ENCODE measurements at regions of chr1 and their contacts with region 1.

Region 1: GRCh38 chr1:201023517-201023902 is at the start of gene KIF21B:
- DNase-seq: peak; percentile 92
- ATAC-seq: peak; percentile 83
- H3K4me3 ChIP-seq: peak within 1 kb of the TSS; percentile 53 to 83 (median 72)
- H3K4me3 Mint-ChIP-seq: peak within 1 kb of the TSS; percentile 97
- H3K27ac ChIP-seq: peak within 1 kb of the TSS; percentile 90 to 95
- H3K27ac Mint-ChIP-seq: peak within 1 kb of the TSS; percentile 98
- H3K4me1 ChIP-seq: peaks cover 69 to 79% of the 10 kb centered on the region in 2 donors
- H3K4me1 Mint-ChIP-seq: peaks cover 77% of the 10 kb centered on the region
- H3K27me3 ChIP-seq: no peaks in the 10 kb centered on the region
- H3K27me3 Mint-ChIP-seq: no peaks in the 10 kb centered on the region
- CTCF ChIP-seq: no peak
- total RNA-seq, gene KIF21B: 41.6 and 42.0 TPM in 2 replicates

Region 2: DNA sequence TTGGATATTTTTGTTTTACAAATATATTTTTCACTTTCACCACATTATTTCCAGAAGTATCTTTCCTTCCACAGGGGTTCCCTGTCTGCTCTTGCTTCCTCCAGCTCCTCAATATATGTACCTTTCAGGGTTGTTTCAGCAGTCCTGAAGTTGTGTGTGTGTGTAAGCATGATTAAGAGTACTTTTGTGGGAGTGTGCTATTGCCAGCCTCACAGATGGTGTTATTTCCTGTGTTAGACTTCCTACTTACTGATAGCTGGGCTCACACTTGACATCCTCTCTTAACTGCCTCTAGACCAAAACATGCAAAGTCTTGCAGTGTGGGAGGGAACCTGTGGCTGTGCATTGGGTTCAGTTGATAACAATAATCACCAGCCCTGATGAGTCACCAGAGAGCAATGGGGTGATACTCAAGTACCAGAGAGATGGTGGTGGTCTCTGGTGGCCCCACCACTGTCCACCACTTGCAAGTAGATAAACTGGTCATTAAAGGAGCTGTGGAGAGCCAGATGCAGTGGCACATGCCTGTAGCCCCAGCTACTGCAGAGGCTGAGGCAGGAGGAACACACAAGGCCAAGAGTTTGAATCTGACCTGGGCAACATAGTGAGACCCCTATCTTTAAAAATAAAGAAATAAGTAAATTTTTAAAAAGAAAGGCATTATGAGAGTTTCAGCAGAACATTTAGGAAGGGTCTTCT is 869.3 kb before region 1 on chr1:
- CTCF ChIA-PET with region 1: no interaction called
- POLR2A ChIA-PET with region 1: no interaction called
- intact Hi-C with region 1: loop called (anchors 10 kb)
- DNase-seq: peak; percentile 78
- ATAC-seq: peak; percentile 88
- H3K4me3 ChIP-seq: peak overlapping the region in 2 of 5 experiments; percentile 18 to 50
- H3K4me3 Mint-ChIP-seq: peak overlapping the region; percentile 80
- H3K27ac ChIP-seq: peak overlapping the region; percentile 78 to 98
- H3K27ac Mint-ChIP-seq: peak overlapping the region; percentile 93
- H3K4me1 ChIP-seq: peaks cover 40 to 52% of the 10 kb centered on the region in 2 donors
- H3K4me1 Mint-ChIP-seq: peaks cover 59% of the 10 kb centered on the region
- H3K27me3 ChIP-seq: no peaks in the 10 kb centered on the region
- H3K27me3 Mint-ChIP-seq: no peaks in the 10 kb centered on the region
- CTCF ChIP-seq: no peak

Region 3: GRCh38 chr1:200669314-200670241 is 353.9 kb before region 1 on chr1 and contains the start of gene DDX59:
- CTCF ChIA-PET with region 1: no interaction called
- POLR2A ChIA-PET with region 1: interaction called, 4 read pairs
- intact Hi-C with region 1: loop called (anchors 5 kb)
- DNase-seq: peak; percentile 92
- ATAC-seq: peak; percentile 82
- H3K4me3 ChIP-seq: peak within 1 kb of the TSS; percentile 56 to 95 (median 78)
- H3K4me3 Mint-ChIP-seq: peak within 1 kb of the TSS; percentile 99
- H3K27ac ChIP-seq: peak within 1 kb of the TSS; percentile 92 to 98
- H3K27ac Mint-ChIP-seq: peak within 1 kb of the TSS; percentile 99
- H3K4me1 ChIP-seq: peaks cover 8 to 13% of the 10 kb centered on the region in 2 donors
- H3K4me1 Mint-ChIP-seq: peaks cover 42% of the 10 kb centered on the region
- H3K27me3 ChIP-seq: no peaks in the 10 kb centered on the region
- H3K27me3 Mint-ChIP-seq: no peaks in the 10 kb centered on the region
- CTCF ChIP-seq: no peak
- total RNA-seq, gene DDX59: 41.9 and 43.6 TPM in 2 replicates

Region 4: GRCh38 chr1:200780545-200781369 is 242.8 kb before region 1 on chr1:
- CTCF ChIA-PET with region 1: no interaction called
- POLR2A ChIA-PET with region 1: no interaction called
- intact Hi-C with region 1: no loop called
- DNase-seq: peak; percentile 4
- ATAC-seq: no peak
- H3K4me3 ChIP-seq: no peak overlapping the region
- H3K4me3 Mint-ChIP-seq: peak overlapping the region; percentile 33
- H3K27ac ChIP-seq: no peak overlapping the region
- H3K27ac Mint-ChIP-seq: no peak overlapping the region
- H3K4me1 ChIP-seq: peaks cover 0 to 4% of the 10 kb centered on the region in 2 donors
- H3K4me1 Mint-ChIP-seq: peaks cover 5% of the 10 kb centered on the region
- H3K27me3 ChIP-seq: no peaks in the 10 kb centered on the region
- H3K27me3 Mint-ChIP-seq: no peaks in the 10 kb centered on the region
- CTCF ChIP-seq: no peak

Region 5: DNA sequence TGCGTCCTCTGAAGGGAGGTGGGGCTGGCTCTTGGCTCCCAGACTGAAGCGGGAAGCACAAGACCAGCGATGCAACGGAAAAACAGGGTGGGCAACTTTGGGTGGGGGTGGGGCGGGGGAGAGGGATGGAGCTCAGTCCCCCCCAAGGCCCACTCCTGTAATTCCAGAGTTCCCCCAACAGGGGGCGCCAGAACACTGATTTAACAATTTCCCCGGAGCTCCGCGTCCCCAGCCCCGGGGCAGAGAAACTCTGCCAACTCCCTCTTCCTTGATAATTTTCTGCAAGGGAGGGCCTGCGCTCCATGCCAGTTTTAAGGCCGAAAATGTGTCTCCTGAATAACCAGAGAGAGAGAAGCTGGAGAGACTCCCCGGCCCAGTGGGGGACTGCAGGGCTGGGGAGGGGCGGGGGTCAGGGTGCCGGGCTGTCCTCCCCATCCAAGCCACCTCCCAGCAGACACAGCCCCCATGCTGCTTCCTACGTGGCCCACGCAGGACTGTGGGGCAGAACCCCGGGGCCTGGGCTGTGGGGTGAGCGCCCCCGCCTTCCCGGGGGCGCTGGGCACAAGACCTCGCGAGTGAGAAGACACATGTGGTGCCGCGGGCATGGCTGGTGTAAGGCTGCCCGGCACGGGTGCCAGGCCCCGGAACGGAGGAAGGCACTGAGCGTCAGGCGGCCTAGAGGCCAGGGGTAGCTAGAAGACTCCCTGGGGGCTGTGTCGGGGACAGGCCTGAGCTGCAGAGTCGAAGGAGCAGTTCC is 51.4 kb before region 1 on chr1:
- CTCF ChIA-PET with region 1: interaction called, 67 read pairs
- POLR2A ChIA-PET with region 1: interaction called, 3 read pairs
- intact Hi-C with region 1: no loop called
- DNase-seq: peak; percentile 69
- ATAC-seq: peak; percentile 49
- H3K4me3 ChIP-seq: no peak overlapping the region
- H3K4me3 Mint-ChIP-seq: no peak overlapping the region
- H3K27ac ChIP-seq: no peak overlapping the region
- H3K27ac Mint-ChIP-seq: no peak overlapping the region
- H3K4me1 ChIP-seq: no peaks in the 10 kb centered on the region
- H3K4me1 Mint-ChIP-seq: peaks cover 11% of the 10 kb centered on the region
- H3K27me3 ChIP-seq: no peaks in the 10 kb centered on the region
- H3K27me3 Mint-ChIP-seq: no peaks in the 10 kb centered on the region
- CTCF ChIP-seq: peak; percentile 99

Region 6: GRCh38 chr1:201114236-201115131 is 91.0 kb after region 1 on chr1:
- CTCF ChIA-PET with region 1: interaction called, 7 read pairs
- POLR2A ChIA-PET with region 1: no interaction called
- intact Hi-C with region 1: loop called (anchors 1 kb)
- DNase-seq: peak; percentile 78
- ATAC-seq: peak; percentile 88
- H3K4me3 ChIP-seq: peak overlapping the region; percentile 31 to 77 (median 58)
- H3K4me3 Mint-ChIP-seq: peak overlapping the region; percentile 87
- H3K27ac ChIP-seq: no peak overlapping the region
- H3K27ac Mint-ChIP-seq: no peak overlapping the region
- H3K4me1 ChIP-seq: peaks cover 4 to 13% of the 10 kb centered on the region in 2 donors
- H3K4me1 Mint-ChIP-seq: peaks cover 4% of the 10 kb centered on the region
- H3K27me3 ChIP-seq: peaks cover 0 to 32% (median 14%) of the 10 kb centered on the region in 4 experiments
- H3K27me3 Mint-ChIP-seq: peaks cover 29% of the 10 kb centered on the region
- CTCF ChIP-seq: peak; percentile 75

Region 7: DNA sequence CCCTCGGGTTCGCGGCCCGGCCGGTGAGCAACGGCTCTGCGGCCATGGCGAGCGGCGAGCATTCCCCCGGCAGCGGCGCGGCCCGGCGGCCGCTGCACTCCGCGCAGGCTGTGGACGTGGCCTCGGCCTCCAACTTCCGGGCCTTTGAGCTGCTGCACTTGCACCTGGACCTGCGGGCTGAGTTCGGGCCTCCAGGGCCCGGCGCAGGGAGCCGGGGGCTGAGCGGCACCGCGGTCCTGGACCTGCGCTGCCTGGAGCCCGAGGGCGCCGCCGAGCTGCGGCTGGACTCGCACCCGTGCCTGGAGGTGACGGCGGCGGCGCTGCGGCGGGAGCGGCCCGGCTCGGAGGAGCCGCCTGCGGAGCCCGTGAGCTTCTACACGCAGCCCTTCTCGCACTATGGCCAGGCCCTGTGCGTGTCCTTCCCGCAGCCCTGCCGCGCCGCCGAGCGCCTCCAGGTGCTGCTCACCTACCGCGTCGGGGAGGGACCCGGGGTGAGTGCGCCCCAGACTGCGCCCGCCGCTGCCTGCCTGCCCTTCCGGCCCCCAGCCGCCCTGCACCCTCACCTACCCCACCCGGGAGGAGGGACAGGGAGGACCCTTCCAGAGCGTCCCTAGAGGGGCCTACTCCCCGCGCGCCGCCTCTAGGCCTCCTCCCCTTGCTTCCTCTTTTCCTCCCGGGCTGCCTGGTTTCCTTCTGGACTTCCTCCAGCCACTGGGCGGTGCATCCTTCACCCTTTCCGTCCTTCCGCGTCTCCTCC is 959.3 kb after region 1 on chr1 and contains the start of gene RNPEP:
- CTCF ChIA-PET with region 1: no interaction called
- POLR2A ChIA-PET with region 1: no interaction called
- intact Hi-C with region 1: loop called (anchors 5 kb)
- DNase-seq: peak; percentile 79
- ATAC-seq: peak; percentile 78
- H3K4me3 ChIP-seq: peak within 1 kb of the TSS; percentile 53 to 94 (median 67)
- H3K4me3 Mint-ChIP-seq: peak within 1 kb of the TSS; percentile 97
- H3K27ac ChIP-seq: peak within 1 kb of the TSS; percentile 6 to 54
- H3K27ac Mint-ChIP-seq: peak within 1 kb of the TSS; percentile 92
- H3K4me1 ChIP-seq: peaks cover 11 to 13% of the 10 kb centered on the region in 2 donors
- H3K4me1 Mint-ChIP-seq: peaks cover 27% of the 10 kb centered on the region
- H3K27me3 ChIP-seq: no peaks in the 10 kb centered on the region
- H3K27me3 Mint-ChIP-seq: no peaks in the 10 kb centered on the region
- CTCF ChIP-seq: no peak
- total RNA-seq, gene RNPEP: 42.9 and 43.1 TPM in 2 replicates